ENCODE measurements at regions of chr1 and their contacts with region 1.

Region 1: DNA sequence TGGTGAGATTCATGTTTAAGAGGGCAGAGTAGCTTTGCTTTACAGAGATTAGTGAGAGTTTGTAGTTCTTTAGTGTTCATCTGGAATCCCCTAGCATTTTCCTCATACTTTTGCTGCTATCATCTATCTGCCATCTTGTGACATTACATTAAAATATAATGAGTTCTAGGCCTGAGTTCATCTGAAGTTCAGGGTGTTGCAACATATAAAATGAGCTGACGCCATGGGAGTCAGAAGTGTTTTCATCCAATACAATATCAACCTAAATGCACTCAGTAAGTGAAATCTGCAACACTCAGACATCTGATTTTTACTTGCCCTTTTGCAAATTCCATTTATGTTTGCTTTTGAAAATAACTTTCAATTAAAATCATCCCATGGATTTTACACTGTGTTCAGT is 153.8 kb downstream of the NTNG1 start:
- DNase-seq: no peak
- H3K4me3 ChIP-seq: no peak overlapping the region
- CTCF ChIP-seq: no peak

Region 2: DNA sequence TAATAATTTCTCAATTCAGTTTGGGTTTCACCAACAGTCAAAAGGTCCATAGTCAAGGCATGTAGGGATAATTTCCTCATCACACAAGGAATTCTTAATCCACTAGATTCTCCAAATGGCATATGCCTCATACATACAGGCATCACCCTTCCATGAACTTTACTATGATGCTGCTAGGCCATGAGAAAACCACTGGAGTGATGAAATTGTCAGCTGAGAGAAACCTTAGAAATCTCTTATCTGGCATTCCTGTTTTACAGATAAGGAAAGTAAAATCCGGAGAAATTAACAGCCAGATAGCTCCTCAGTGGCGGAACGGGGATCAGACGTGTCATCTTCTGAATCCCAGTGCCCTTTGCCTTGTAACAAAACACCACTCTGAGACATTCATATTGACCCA is 120.6 kb after region 1 on chr1:
- in situ Hi-C with region 1: loop called (anchors 5 kb)
- DNase-seq: no peak
- H3K4me3 ChIP-seq: no peak overlapping the region
- CTCF ChIP-seq: no peak

Region 3: GRCh38 chr1:107609808-107610207 is 315.1 kb after region 1 on chr1:
- in situ Hi-C with region 1: no loop called
- DNase-seq: no peak
- H3K4me3 ChIP-seq: no peak overlapping the region
- CTCF ChIP-seq: no peak